ENCODE measurements at regions of chr14 and their contacts with region 1.

Region 1: GRCh38 chr14:28652811-28653221 is 113.8 kb upstream of the FOXG1 start:
- DNase-seq: peak; percentile 96
- ATAC-seq: peak; percentile 89
- H3K4me3 ChIP-seq: peak overlapping the region; percentile 12; the same call in 1 of the 2 replicates
- H3K27ac ChIP-seq: peak overlapping the region; percentile 95
- H3K4me1 ChIP-seq: peaks cover 56% of the 10 kb centered on the region
- H3K27me3 ChIP-seq: no peaks in the 10 kb centered on the region
- CTCF ChIP-seq: no peak

Region 2: DNA sequence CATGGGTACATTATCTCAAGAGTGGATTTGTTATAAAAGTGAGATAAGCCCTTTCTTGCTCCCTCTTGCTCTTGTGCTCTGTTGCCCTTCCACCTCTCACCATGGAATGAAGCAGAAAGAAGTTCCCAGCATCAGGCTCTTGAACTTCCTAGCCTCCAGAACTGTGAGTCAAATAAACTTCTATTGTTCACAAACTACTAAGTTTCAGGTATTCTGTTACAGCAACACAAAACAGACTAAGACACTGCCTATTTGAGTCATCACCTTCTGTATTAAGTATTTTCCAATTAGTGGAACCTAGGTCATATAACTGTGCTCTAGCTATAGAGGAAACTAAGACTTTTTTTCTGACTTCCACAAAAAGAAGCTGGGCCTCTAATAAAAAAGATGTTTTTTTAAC is 87.5 kb before region 1 on chr14:
- CTCF ChIA-PET with region 1: no interaction called
- POLR2A ChIA-PET with region 1: no interaction called
- intact Hi-C with region 1: no loop called
- DNase-seq: no peak
- ATAC-seq: no peak
- H3K4me3 ChIP-seq: no peak overlapping the region
- H3K27ac ChIP-seq: no peak overlapping the region
- H3K4me1 ChIP-seq: peaks cover 3% of the 10 kb centered on the region
- H3K27me3 ChIP-seq: no peaks in the 10 kb centered on the region
- CTCF ChIP-seq: no peak

Region 3: GRCh38 chr14:28608851-28609828 is 43.7 kb before region 1 on chr14:
- CTCF ChIA-PET with region 1: no interaction called
- POLR2A ChIA-PET with region 1: no interaction called
- intact Hi-C with region 1: no loop called
- DNase-seq: peak; percentile 82
- ATAC-seq: peak; percentile 80
- H3K4me3 ChIP-seq: no peak overlapping the region
- H3K27ac ChIP-seq: no peak overlapping the region
- H3K4me1 ChIP-seq: peaks cover 5% of the 10 kb centered on the region; the same call in 1 of the 2 replicates
- H3K27me3 ChIP-seq: no peaks in the 10 kb centered on the region
- CTCF ChIP-seq: peak; percentile 97

Region 4: DNA sequence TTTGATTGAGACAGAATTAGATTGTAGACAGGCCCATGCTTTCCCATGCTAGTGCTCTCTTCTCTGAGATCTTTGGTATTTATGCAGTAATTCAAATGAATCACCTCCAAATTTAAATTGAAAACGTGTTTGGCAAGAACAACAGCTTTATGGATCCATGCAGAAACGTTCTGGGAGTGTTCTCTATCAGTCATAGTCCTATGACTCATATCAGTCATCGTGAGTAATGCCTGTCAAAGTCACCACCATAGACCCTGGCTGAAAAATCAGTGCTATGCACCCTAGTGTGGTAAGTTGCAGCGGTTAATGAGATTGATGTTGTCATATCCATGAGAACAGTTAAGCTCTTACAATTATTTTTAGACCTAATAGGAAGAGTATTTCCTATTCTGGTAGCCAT is 23.7 kb after region 1 on chr14:
- CTCF ChIA-PET with region 1: no interaction called
- POLR2A ChIA-PET with region 1: no interaction called
- intact Hi-C with region 1: loop called (anchors 1 kb)
- DNase-seq: peak; percentile 98
- ATAC-seq: peak; percentile 96
- H3K4me3 ChIP-seq: peak overlapping the region; percentile 13; the same call in 1 of the 2 replicates
- H3K27ac ChIP-seq: peak overlapping the region; percentile 76
- H3K4me1 ChIP-seq: peaks cover 58% of the 10 kb centered on the region
- H3K27me3 ChIP-seq: no peaks in the 10 kb centered on the region
- CTCF ChIP-seq: no peak

Region 5: DNA sequence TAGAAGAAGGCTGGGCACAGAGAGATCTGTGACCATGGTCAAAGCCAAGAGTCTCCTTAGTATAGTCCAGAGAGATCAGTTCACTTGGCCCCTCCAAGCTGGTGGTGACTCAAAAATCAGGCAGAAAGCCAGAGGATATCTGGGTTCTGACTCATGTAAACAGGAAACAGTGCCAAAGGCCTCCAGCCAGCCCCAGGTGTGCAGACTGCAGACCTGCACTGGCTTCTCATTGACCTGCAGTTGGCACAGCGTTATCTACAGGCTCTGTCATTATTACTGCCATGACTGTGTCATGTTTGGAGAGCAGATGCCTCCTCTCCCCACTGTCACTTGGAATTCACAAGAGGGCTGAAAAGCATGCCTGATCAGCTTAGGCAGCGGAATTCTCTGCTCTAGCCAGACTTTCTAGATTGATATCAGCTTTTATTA is 1570.6 kb after region 1 on chr14:
- CTCF ChIA-PET with region 1: no interaction called
- POLR2A ChIA-PET with region 1: no interaction called
- intact Hi-C with region 1: loop called (anchors 10 kb)
- DNase-seq: peak; percentile 99
- ATAC-seq: peak; percentile 93
- H3K4me3 ChIP-seq: 0 out of 2 replicates have a peak overlapping the region, but pooled peaks have one; percentile 7
- H3K27ac ChIP-seq: peak overlapping the region; percentile 47
- H3K4me1 ChIP-seq: peaks cover 47% of the 10 kb centered on the region
- H3K27me3 ChIP-seq: no peaks in the 10 kb centered on the region
- CTCF ChIP-seq: no peak

Measured in PC-3 (cell line).